Psoas muscle (tissue), 8 donors: ENCODE measurements at regions of chr22 and their contacts with region 1.

Region 1: GRCh38 chr22:28741758-28742561 is at the starts of genes CHEK2 and HSCB:
- DNase-seq: peak; percentile 97 to 99
- ATAC-seq: peak; percentile 99
- H3K4me3 ChIP-seq: peak within 1 kb of the TSS; percentile 98
- H3K27ac ChIP-seq: peak within 1 kb of the TSS; percentile 97
- H3K4me1 ChIP-seq: peaks cover 8% of the 10 kb centered on the region
- H3K27me3 ChIP-seq: no peaks in the 10 kb centered on the region
- CTCF ChIP-seq: peak; percentile 1
- total RNA-seq, gene CHEK2: 1.2 to 6.9 (median 2.3) TPM
- total RNA-seq, gene HSCB: 10.3 to 15.7 (median 11.3) TPM

Region 2: DNA sequence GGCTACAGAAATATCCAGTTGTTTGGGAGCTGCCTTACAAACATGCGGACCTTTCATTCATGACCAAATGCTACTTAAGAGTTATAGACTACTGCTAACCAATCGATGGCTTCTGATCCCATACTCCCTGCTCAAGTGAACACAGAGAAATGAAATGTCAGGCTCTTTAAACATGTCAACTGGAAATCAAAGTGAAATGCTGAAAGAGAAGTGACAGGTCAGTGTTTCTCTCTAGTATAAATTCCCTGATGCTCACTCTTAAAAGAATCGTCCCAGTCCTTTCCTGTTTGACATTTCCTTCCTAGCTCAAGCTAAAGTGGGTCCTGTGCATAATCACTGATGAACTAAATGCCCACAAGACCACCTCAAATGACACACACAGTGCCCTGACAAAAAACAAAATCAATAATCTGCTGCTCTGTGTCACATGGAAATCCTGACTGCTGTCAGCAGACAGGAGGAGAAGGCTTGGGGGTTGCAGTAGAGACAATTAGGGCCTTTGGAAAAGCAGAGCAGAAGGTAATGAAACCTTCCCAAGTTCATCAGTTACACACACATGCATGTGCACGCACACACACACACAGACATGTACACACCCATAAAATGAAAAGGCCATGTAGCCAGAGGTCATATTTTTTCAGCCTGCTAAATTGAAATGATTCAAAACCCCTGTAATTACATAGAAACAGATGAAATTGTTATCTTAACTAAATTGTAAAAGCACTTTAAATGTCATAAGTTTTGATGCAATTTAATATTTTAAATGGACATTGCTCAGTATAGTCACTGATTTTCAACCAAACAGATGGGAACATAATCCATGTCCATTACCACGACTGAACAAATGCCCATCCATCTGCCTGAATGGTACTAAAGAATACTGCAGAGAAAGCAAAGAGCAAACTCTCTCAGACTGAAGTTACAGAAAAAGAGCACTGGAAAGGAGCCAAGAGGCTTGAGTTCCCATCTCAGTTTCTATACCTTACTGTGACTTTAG is 393.0 kb before region 1 on chr22:
- intact Hi-C with region 1: no loop called
- DNase-seq: no peak
- ATAC-seq: no peak
- H3K4me3 ChIP-seq: no peak overlapping the region
- H3K27ac ChIP-seq: no peak overlapping the region
- H3K4me1 ChIP-seq: peaks cover 19% of the 10 kb centered on the region
- H3K27me3 ChIP-seq: no peaks in the 10 kb centered on the region
- CTCF ChIP-seq: no peak

Region 3: DNA sequence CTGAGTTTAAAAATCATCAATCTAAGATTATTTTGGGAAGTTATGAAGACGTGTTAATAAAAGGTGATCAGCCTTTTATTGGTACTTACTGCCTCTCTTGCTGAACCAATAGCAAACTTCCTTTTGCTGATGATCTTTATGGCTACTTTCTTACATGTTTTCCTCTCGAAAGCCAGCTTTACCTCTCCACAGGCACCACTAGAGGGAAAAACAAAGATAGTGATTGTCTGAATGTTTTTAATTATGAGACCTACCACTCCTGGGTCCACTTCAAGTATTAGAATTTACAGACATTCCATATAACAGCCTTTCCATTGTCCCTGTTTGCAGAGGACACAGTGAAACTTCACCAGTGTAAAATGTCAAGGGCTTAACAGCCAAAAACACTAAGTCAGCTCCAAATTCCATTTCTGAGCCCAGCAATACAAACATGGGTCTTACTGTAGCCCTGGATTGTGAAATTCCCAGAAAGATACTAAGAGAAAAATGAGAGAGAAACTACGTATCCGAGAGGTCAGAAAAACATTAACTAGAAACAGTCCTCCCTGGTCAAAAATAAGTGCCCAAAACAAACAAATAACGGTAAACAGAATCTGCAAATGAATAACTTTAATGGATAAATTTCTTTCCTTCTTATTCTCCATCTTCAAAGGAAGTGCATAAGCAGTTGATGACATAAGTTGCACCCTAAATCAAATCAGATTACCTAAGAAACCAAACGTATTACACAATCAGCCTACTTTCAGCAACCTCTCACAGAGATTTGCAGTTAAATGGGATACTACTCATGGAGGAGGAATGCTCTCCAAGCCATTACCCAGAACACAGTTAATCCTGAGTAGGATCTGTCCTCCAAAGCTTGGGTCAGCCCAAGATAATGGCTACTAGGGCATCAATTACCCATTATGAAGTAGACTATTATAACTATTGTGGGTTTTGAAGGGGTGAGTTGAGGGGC is 29.9 kb before region 1 on chr22:
- intact Hi-C with region 1: loop called in 1 of 2 experiments (anchors 2 kb)
- DNase-seq: no peak
- ATAC-seq: peak; percentile 93 to 96 (median 94)
- H3K4me3 ChIP-seq: peak overlapping the region; percentile 58
- H3K27ac ChIP-seq: peak overlapping the region; percentile 80
- H3K4me1 ChIP-seq: peaks cover 36% of the 10 kb centered on the region
- H3K27me3 ChIP-seq: no peaks in the 10 kb centered on the region
- CTCF ChIP-seq: no peak

Region 4: GRCh38 chr22:28800308-28801077 is 58.5 kb after region 1 on chr22 and contains the start of gene XBP1:
- intact Hi-C with region 1: loop called in 1 of 2 experiments (anchors 1 kb)
- DNase-seq: peak; percentile 95 to 97
- ATAC-seq: peak; percentile 88 to 95 (median 92)
- H3K4me3 ChIP-seq: peak within 1 kb of the TSS; percentile 82
- H3K27ac ChIP-seq: peak within 1 kb of the TSS; percentile 100
- H3K4me1 ChIP-seq: peaks cover 36% of the 10 kb centered on the region
- H3K27me3 ChIP-seq: no peaks in the 10 kb centered on the region
- CTCF ChIP-seq: no peak
- total RNA-seq, gene XBP1: 38.9 to 151 (median 98.8) TPM

Region 5: GRCh38 chr22:28882878-28883656 is 141.1 kb after region 1 on chr22 and contains the start of gene ZNRF3:
- intact Hi-C with region 1: no loop called
- DNase-seq: peak; percentile 94 to 96
- ATAC-seq: peak; percentile 95 to 97 (median 96)
- H3K4me3 ChIP-seq: peak within 1 kb of the TSS; percentile 81
- H3K27ac ChIP-seq: peak within 1 kb of the TSS; percentile 83
- H3K4me1 ChIP-seq: peaks cover 29% of the 10 kb centered on the region
- H3K27me3 ChIP-seq: no peaks in the 10 kb centered on the region
- CTCF ChIP-seq: no peak
- total RNA-seq, gene ZNRF3: 4.9 to 8.5 (median 7.4) TPM

Region 6: DNA sequence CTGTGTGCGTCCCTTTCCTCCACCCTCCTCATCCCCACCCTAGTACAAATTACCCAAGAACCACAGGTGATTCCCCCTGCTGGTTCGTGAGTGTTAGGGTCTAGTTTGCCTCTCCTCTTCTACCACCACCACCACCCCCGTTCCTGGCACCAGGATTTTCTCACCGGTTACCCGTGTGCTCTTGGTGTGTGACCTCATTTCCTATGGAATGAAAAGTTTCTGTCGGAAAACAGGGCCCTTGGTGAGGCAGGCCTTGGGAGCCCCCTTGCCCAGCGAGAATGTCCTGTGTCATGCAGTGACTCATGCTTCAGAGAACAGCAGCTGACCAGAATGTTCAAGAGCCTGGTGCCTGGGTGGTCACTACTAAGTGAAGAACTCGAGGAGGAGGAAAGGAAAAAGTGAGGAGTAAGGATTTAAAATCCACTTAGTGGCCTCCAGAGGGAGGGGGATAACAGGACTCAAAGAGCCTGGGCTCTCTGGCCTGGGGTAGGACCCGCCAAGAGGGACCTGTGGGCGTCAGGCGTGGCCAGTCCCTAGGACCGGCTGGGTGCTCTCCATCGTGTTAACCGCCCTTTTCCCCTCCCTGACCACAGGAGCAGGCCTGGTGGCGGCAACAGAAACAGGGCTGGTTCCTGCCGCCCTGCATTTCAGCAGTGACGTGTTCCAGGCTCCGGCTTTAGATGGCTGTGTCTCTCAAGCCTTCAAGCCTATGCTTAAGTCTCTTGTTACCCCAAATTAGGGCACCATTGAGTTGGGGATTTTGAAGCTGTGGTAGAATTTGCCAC is 289.5 kb after region 1 on chr22:
- intact Hi-C with region 1: no loop called
- DNase-seq: peak; percentile 68 to 70
- ATAC-seq: peak; percentile 88 to 91 (median 90)
- H3K4me3 ChIP-seq: peak overlapping the region; percentile 64
- H3K27ac ChIP-seq: peak overlapping the region; percentile 87
- H3K4me1 ChIP-seq: peaks cover 39% of the 10 kb centered on the region
- H3K27me3 ChIP-seq: no peaks in the 10 kb centered on the region
- CTCF ChIP-seq: peak; percentile 14

Region 7: DNA sequence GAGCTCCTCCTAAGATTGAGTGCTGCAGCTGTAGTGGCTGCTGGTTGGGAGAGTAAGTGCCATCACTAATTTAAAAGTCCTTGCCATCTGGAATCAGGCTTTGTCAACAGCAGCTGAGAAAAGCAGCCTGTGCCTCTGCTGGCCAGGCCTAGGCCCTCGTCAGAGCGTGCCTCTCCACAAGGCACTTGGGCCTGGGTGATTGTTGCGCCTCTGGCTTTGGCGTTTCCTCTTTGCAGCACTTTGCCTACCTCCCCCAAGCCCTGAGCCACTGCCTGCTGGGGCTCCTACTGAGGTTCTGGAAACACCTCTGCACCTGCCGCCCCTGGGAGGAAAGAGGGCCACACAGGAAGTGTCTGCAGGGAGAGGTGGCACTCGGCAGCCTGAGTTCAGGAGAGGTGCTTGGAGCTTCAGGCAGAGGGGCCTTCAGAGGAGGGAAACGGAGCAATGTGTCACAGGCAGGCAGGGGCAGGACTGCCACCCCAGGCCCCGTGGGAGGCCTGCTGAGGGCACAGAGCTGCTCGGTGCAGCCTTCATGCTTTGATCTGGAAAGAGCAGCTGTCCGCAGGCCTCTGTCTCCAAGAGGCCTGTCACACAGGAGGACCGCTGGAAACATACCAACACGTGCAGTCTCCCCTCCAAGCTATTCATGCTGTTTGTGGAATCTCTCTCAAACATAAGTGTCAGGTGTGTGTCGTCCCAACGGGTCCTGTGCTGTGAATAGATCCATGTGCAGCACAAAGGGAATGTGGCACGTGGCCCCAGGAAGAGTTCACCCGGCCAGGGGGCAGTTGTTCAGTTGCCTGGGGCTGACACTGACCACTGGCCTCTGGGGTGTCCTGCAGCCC is 402.2 kb after region 1 on chr22:
- intact Hi-C with region 1: no loop called
- DNase-seq: peak; percentile 51 to 75
- ATAC-seq: peak; percentile 62 to 69 (median 66)
- H3K4me3 ChIP-seq: peak overlapping the region; percentile 29
- H3K27ac ChIP-seq: peak overlapping the region; percentile 90
- H3K4me1 ChIP-seq: peaks cover 59% of the 10 kb centered on the region
- H3K27me3 ChIP-seq: no peaks in the 10 kb centered on the region
- CTCF ChIP-seq: no peak